GM12878 (cell line): ENCODE measurements at regions of chr12 and their contacts with region 1.

Region 1: GRCh38 chr12:119869720-119870119 is 7.4 kb downstream of the CIT start:
- DNase-seq: no peak
- ATAC-seq: no peak
- H3K4me3 ChIP-seq: no peak overlapping the region
- H3K27ac ChIP-seq: no peak overlapping the region
- H3K4me1 ChIP-seq: no peaks in the 10 kb centered on the region
- H3K27me3 ChIP-seq: no peaks in the 10 kb centered on the region
- CTCF ChIP-seq: no peak
- EP300 ChIP-seq: no peak
- POLR2A ChIP-seq: no peak
- RAD21 ChIP-seq: no peak

Region 2: DNA sequence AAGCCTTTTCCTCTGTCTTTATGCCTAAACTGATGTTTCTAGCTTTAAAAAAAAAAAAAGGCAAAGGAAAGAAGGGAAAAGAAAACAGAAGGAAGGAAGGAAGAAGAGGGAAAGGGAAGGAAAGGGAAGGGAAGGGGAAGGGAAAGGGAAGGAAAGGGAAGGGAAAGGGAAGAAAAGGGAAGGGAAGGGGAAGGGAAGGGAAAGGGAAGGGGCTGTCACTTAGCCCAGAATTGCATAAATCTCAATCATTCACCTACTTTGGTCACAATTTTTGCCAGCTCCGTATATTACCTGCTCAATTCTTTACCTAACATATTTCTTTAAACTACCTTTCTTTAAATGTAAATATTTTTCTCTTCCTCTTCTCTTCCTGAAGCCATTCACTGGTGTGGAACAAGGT is 19.4 kb before region 1 on chr12:
- CTCF ChIA-PET with region 1: no interaction called
- POLR2A ChIA-PET with region 1: interaction called, 10 read pairs
- RAD21 ChIA-PET with region 1: no interaction called
- SMC1A ChIA-PET with region 1: interaction called, 4 read pairs
- in situ Hi-C with region 1: no loop called
- intact Hi-C with region 1: no loop called
- DNase-seq: no peak
- ATAC-seq: no peak
- H3K4me3 ChIP-seq: no peak overlapping the region
- H3K27ac ChIP-seq: no peak overlapping the region
- H3K4me1 ChIP-seq: no peaks in the 10 kb centered on the region
- H3K27me3 ChIP-seq: no peaks in the 10 kb centered on the region
- CTCF ChIP-seq: no peak
- EP300 ChIP-seq: no peak
- POLR2A ChIP-seq: no peak
- RAD21 ChIP-seq: no peak